AG04449 (cell line): ENCODE measurements at regions of chr6 and their contacts with region 1.

Region 1: DNA sequence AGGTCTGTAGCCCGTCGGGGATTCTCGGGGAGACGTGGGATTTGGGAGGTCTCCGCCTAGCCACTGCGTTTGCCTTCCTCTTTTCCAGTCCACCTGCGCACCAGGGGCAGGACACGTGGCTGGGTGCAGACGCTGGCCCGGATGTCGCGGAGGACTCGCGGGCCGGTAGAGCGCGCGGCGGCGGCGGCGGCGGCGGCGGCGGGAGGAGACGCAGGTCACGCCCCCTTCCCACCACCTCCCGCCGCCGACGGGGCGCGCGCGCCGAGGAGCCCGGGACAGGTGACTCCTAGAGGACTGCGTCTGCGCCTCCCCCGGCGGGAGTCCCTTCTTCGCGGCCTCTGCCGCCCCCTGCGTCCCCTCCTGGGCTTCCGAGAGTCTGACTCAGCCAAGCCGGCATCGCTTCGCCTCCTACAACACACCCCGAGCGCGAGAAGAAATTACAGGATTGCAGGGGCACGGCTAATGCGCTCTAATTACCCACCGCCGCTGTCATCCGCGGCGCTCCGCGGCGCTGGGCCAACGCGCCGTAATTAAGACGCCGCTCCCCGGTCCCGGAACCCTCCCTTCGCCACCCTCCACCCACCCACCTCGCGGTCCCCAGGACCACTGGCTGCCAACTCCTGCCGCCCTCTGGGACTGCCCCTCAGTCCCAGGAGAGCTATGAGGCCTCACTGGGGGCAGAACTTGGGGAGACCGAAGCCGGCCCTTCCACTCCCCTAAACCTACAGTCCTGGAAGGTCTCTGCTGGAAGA is 124.5 kb downstream of the MRPL14 start:
- DNase-seq: no peak
- H3K4me3 ChIP-seq: peak overlapping the region; percentile 50
- CTCF ChIP-seq: peak; percentile 41

Region 2: GRCh38 chr6:43702534-43703440 is 300.0 kb before region 1 on chr6:
- CTCF ChIA-PET with region 1: no interaction called
- POLR2A ChIA-PET with region 1: no interaction called
- DNase-seq: peak; percentile 63
- H3K4me3 ChIP-seq: no peak overlapping the region
- CTCF ChIP-seq: no peak

Region 3: GRCh38 chr6:43990627-43991619 is 11.8 kb before region 1 on chr6:
- CTCF ChIA-PET with region 1: interaction called, 10 read pairs
- POLR2A ChIA-PET with region 1: interaction called, 3 read pairs
- DNase-seq: no peak
- H3K4me3 ChIP-seq: no peak overlapping the region
- CTCF ChIP-seq: no peak